PC-3 (cell line): ENCODE measurements at regions of chr5 and their contacts with region 1.

Region 1: DNA sequence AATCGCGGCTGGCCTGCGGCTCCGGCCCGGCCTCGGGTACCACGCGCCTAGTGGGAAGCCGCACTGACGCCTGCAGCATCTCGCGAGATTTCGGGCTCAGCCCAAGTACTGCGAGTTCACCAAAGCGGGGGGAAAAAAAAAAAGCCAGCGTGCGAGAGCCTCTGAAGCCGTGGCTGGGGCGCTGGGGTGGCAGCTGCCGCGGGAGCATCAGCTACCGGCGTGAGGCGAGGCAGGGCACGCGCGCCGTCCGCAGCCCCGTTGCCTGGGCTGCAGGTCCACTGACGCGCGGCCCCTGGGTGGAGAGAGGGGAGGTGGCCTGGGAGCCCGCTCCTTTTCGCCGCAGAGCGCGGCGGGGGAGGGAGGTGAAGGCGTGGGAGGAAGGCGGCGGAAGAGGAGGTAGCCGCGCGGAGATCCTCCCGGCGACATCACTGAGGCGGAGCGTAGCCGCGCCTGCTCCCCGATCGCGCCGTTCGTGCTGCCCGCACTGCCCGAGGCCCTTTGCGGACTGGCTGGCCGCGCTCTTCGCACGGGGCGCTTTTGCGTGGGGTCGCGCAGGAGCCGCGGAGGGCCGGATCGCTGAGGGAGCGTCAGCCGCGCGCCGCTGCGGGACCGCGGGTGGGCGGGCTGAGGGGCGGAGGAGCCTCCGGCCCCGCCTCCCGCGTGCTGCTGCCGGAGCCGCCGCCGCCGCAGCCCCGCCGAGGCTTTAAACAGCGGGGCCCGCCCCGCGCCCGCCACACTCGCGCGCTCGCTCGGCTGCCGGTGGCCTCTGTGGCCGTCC is at the start of gene SLC12A2:
- DNase-seq: peak; percentile 92
- ATAC-seq: peak; percentile 63
- H3K4me3 ChIP-seq: peak within 1 kb of the TSS; percentile 89
- H3K27ac ChIP-seq: peak within 1 kb of the TSS; percentile 84
- H3K4me1 ChIP-seq: peaks cover 42% of the 10 kb centered on the region
- H3K27me3 ChIP-seq: no peaks in the 10 kb centered on the region
- CTCF ChIP-seq: no peak
- total RNA-seq, gene SLC12A2: 33.9 and 42.3 TPM in 2 replicates

Region 2: GRCh38 chr5:127757576-127757975 is 325.6 kb before region 1 on chr5:
- CTCF ChIA-PET with region 1: interaction called, 3 read pairs
- POLR2A ChIA-PET with region 1: no interaction called
- intact Hi-C with region 1: loop called (anchors 1 kb)
- DNase-seq: peak; percentile 78
- ATAC-seq: peak; percentile 81
- H3K4me3 ChIP-seq: no peak overlapping the region
- H3K27ac ChIP-seq: no peak overlapping the region
- H3K4me1 ChIP-seq: peaks cover 6% of the 10 kb centered on the region
- H3K27me3 ChIP-seq: no peaks in the 10 kb centered on the region
- CTCF ChIP-seq: peak; percentile 84

Region 3: DNA sequence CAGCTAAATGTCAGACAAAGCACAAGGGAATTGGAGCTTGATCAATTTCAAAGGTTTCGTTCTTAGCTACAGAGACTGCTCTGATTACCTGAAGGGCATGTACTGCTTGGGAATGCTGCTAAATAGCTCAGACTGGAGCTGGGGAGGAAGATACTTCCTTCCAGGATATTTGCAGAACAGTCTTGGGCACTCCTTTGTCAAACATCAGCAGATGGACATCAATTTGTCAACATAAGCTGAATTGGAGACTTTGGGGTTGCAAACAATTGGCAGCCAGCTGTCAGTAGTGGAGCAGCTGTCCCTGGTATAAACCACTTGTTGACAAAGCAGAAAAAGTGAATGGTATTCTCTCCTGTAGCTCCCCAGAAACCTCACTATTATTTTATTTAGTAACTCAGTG is 198.0 kb before region 1 on chr5:
- CTCF ChIA-PET with region 1: interaction called, 8 read pairs
- POLR2A ChIA-PET with region 1: interaction called, 10 read pairs
- intact Hi-C with region 1: loop called (anchors 2 kb)
- DNase-seq: peak; percentile 49
- ATAC-seq: peak; percentile 97
- H3K4me3 ChIP-seq: no peak overlapping the region
- H3K27ac ChIP-seq: no peak overlapping the region
- H3K4me1 ChIP-seq: 0 out of 2 replicates have a peak, but pooled peaks cover 6% of the 10 kb centered on the region
- H3K27me3 ChIP-seq: no peaks in the 10 kb centered on the region
- CTCF ChIP-seq: no peak

Region 4: GRCh38 chr5:127934791-127935256 is 148.4 kb before region 1 on chr5:
- CTCF ChIA-PET with region 1: interaction called, 7 read pairs
- POLR2A ChIA-PET with region 1: interaction called, 6 read pairs
- intact Hi-C with region 1: loop called (anchors 2 kb)
- DNase-seq: peak; percentile 99
- ATAC-seq: peak; percentile 94
- H3K4me3 ChIP-seq: no peak overlapping the region
- H3K27ac ChIP-seq: peak overlapping the region; percentile 89
- H3K4me1 ChIP-seq: peaks cover 41% of the 10 kb centered on the region
- H3K27me3 ChIP-seq: no peaks in the 10 kb centered on the region
- CTCF ChIP-seq: peak; percentile 60

Region 5: GRCh38 chr5:127988146-127988760 is 95.0 kb before region 1 on chr5:
- CTCF ChIA-PET with region 1: no interaction called
- POLR2A ChIA-PET with region 1: no interaction called
- intact Hi-C with region 1: loop called (anchors 2 kb)
- DNase-seq: peak; percentile 97
- ATAC-seq: peak; percentile 91
- H3K4me3 ChIP-seq: no peak overlapping the region
- H3K27ac ChIP-seq: peak overlapping the region; percentile 76
- H3K4me1 ChIP-seq: peaks cover 17% of the 10 kb centered on the region
- H3K27me3 ChIP-seq: no peaks in the 10 kb centered on the region
- CTCF ChIP-seq: no peak

Region 6: GRCh38 chr5:128002425-128002824 is 80.8 kb before region 1 on chr5:
- CTCF ChIA-PET with region 1: no interaction called
- POLR2A ChIA-PET with region 1: no interaction called
- intact Hi-C with region 1: no loop called
- DNase-seq: no peak
- ATAC-seq: no peak
- H3K4me3 ChIP-seq: no peak overlapping the region
- H3K27ac ChIP-seq: no peak overlapping the region
- H3K4me1 ChIP-seq: no peaks in the 10 kb centered on the region
- H3K27me3 ChIP-seq: no peaks in the 10 kb centered on the region
- CTCF ChIP-seq: no peak

Region 7: DNA sequence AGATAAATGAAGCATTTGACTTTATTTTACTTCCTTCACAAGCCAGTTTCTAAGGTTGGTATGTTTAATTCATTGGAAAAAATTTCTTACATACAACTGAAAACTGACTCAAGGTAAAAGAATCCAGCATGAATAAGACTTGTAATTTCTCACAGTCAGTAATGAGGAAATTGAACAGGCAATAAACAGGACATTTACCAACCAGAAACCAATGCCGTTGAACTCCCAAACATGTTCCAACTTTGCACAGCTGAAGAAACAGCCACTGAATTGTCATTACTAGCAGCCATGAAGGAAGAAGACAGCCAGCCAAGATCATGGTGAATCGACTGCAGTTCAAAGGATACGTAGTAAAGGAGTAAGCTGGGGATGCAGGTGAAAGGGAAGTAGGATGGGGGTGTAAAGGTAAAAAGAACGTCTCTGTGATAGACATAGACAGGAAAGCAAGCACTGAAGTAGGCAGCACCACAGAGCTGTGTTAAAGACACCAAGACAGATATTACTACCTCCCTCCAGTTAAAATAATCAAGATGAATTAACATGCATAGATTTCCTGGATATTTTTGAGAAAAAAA is 21.0 kb before region 1 on chr5:
- CTCF ChIA-PET with region 1: no interaction called
- POLR2A ChIA-PET with region 1: no interaction called
- intact Hi-C with region 1: loop called (anchors 2 kb)
- DNase-seq: peak; percentile 58
- ATAC-seq: peak; percentile 74
- H3K4me3 ChIP-seq: no peak overlapping the region
- H3K27ac ChIP-seq: peak overlapping the region; percentile 11; the same call in 1 of the 2 replicates
- H3K4me1 ChIP-seq: peaks cover 13% of the 10 kb centered on the region
- H3K27me3 ChIP-seq: no peaks in the 10 kb centered on the region
- CTCF ChIP-seq: no peak

Region 8: DNA sequence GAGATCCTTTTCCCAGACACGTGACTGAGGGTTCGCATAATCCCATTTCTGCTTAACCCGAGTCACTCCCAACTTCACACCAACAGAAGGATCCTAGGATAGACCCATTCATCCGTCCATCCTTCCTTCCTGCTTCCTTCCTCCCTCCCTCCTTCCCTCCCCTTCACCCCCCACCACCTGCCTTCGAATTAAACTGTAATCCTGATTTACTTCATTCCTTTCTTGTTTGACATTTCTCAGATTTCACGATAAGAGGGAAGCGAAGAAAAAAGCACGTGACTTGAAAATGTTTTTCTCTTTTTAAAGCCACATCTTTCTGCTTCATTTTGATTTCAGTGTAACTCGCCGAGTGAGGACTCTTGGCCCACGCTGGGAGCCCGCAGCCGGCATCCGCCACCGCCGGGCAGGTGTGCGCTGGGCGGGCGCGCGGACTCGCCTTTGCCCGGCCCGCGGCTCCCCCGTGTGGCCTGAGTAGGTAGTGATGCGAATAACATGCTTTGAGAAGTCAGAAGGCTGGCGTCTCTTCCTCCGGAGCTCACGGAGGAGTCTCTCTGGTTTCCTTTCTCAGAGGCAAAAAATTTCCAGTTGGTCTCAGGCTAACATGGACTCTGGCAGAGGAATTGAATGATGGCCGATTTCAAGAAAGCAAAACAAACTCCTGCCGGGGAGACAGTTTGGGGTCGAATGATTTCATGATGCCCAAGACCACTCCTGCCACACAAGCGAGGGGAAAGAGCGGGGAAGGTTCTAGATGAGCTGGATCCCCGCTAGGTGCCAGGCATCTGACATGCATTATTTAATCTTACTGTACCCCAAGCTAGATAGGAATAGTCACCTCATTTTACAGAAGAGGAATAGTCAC is 118.1 kb after region 1 on chr5:
- CTCF ChIA-PET with region 1: no interaction called
- POLR2A ChIA-PET with region 1: no interaction called
- intact Hi-C with region 1: loop called (anchors 1 kb)
- DNase-seq: peak; percentile 87
- ATAC-seq: peak; percentile 66
- H3K4me3 ChIP-seq: peak overlapping the region; percentile 57
- H3K27ac ChIP-seq: peak overlapping the region; percentile 4; the same call in 1 of the 2 replicates
- H3K4me1 ChIP-seq: peaks cover 33% of the 10 kb centered on the region
- H3K27me3 ChIP-seq: no peaks in the 10 kb centered on the region
- CTCF ChIP-seq: peak; percentile 96